PC-3 (cell line): ENCODE measurements at regions of chrX and their contacts with region 1.

Region 1: DNA sequence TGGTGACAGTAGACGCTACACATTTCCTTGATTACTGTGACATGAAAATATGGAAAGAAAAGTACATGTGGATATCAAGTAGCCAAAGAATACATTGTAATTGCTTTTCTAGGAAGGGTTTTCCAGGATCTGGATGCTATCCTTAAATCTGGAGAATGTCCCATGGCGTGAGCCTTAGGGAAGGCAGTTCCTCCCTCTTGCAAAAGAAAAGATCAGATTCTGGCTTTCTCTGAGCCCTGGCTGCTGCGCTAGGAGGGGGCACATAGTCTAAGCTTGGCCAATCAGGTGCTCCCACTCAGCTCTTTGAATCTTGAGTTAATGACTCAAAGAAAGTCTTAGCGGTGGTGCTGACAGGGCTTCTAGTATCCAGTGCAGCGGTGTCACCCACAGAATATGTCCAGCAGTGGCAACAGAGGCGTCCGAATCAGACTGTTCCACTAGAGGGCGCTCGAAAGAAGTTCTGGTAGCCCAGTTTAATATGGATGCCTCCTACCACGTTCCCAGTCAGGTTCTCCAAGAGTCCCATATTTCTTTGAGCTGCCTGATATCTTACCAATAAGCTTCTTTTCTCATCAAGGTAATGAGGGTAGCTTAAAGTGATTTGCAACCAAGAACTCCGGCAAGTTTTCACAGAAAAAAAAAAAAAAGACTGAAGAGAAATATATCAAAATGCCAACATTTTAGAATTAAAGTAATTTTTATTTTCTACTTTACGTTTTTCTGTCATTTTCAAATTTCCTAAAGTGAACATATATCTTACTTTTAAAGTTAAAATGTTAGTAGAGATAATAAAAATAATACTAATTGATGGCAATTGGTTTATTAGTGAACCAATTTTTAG is 213.4 kb upstream of the S100G start:
- DNase-seq: peak; percentile 91
- ATAC-seq: peak; percentile 95
- H3K4me3 ChIP-seq: no peak overlapping the region
- H3K27ac ChIP-seq: 0 out of 2 replicates have a peak overlapping the region, but pooled peaks have one; percentile 20
- H3K4me1 ChIP-seq: peaks cover 3% of the 10 kb centered on the region; the same call in 1 of the 2 replicates
- H3K27me3 ChIP-seq: no peaks in the 10 kb centered on the region
- CTCF ChIP-seq: peak; percentile 81

Region 2: DNA sequence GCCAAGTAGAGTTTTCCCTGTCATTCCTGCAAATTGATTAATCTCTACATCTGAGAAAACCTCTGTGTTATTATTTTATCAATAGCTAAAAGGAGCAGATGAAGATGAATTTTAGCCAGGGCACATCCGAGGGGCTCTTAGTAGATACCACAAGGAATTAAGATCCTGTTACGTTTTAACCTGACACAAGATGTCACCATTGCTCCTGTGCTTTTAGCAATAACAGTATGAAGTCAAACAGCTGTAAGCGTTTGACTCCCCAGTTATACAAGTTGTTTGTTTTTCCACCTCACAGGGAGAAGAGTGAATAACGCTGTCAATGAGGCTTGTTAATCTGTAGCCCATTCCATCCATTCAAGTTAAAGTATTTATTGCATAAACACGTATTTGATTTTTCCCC is 506.0 kb before region 1 on chrX:
- CTCF ChIA-PET with region 1: no interaction called
- POLR2A ChIA-PET with region 1: no interaction called
- intact Hi-C with region 1: loop called (anchors 10 kb)
- DNase-seq: peak; percentile 66
- ATAC-seq: peak; percentile 88
- H3K4me3 ChIP-seq: no peak overlapping the region
- H3K27ac ChIP-seq: no peak overlapping the region
- H3K4me1 ChIP-seq: no peaks in the 10 kb centered on the region; the same call in 1 of the 2 replicates
- H3K27me3 ChIP-seq: no peaks in the 10 kb centered on the region
- CTCF ChIP-seq: peak; percentile 66

Region 3: DNA sequence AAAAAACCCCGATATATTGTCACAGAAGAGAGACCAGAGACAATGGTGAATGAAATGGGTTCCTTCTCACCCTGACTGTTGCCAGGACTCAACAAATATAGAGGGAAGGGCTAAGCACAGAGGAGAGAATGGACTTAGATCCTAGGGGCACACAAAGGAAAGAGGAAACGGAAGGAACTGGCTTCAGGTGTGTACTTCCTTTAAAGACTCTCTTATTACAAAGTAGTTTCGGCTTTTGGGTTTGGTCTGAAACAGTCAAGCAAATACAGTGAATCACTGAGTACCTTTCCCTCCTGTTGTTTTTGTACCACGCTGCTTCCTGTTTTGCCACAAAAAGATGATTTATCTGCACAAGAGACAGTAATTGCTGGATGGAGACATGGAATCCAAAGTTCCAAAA is 167.3 kb after region 1 on chrX:
- CTCF ChIA-PET with region 1: no interaction called
- POLR2A ChIA-PET with region 1: no interaction called
- intact Hi-C with region 1: loop called (anchors 5 kb)
- DNase-seq: peak; percentile 86
- ATAC-seq: peak; percentile 96
- H3K4me3 ChIP-seq: no peak overlapping the region
- H3K27ac ChIP-seq: peak overlapping the region; percentile 93
- H3K4me1 ChIP-seq: peaks cover 23% of the 10 kb centered on the region
- H3K27me3 ChIP-seq: no peaks in the 10 kb centered on the region
- CTCF ChIP-seq: no peak

Region 4: DNA sequence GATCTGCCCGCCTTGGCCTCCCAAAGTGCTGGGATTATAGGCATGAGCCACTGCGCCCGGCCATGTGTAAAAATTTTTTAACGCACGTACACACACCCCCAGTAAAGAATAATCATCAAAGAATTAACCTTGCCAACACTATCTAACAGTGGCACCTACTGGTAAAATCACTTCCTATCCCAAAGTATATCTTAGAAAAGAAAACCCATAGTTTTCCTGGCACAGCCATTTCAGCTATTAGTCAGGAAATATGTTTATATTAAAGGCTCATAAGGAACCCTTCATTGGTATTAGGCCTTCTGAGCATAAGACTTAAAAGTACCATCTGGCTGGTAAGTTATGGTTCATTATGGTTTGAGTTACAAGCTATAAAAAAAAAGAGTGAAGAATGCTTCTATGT is 227.5 kb after region 1 on chrX:
- CTCF ChIA-PET with region 1: no interaction called
- POLR2A ChIA-PET with region 1: no interaction called
- intact Hi-C with region 1: loop called (anchors 1 kb)
- DNase-seq: peak; percentile 60
- ATAC-seq: peak; percentile 66
- H3K4me3 ChIP-seq: no peak overlapping the region
- H3K27ac ChIP-seq: peak overlapping the region; percentile 38
- H3K4me1 ChIP-seq: peaks cover 48% of the 10 kb centered on the region
- H3K27me3 ChIP-seq: no peaks in the 10 kb centered on the region
- CTCF ChIP-seq: peak; percentile 46

Region 5: DNA sequence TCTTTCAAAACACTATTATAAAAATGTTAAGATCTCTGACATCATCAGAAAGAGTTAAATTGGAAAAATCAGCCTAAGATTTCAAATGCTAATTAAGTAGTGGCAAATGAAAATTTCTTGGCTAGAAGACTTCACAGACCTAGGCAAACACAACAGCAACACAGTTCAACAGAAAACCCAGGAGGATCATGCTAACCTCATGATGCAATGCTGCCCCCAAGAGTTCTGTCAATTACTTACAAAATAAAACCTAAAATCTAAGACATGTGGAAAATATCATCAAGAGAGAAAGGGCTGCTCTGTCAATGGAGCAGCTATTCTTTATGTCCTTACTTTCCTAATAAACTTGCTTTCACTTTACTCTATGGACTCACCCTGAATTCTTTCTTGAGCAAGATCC is 234.4 kb after region 1 on chrX:
- CTCF ChIA-PET with region 1: interaction called, 11 read pairs
- POLR2A ChIA-PET with region 1: no interaction called
- intact Hi-C with region 1: no loop called
- DNase-seq: peak; percentile 59
- ATAC-seq: peak; percentile 77
- H3K4me3 ChIP-seq: no peak overlapping the region
- H3K27ac ChIP-seq: no peak overlapping the region
- H3K4me1 ChIP-seq: peaks cover 9% of the 10 kb centered on the region
- H3K27me3 ChIP-seq: no peaks in the 10 kb centered on the region
- CTCF ChIP-seq: peak; percentile 66